Mammary epithelial cell (primary cell): ENCODE measurements at regions of chr1 and their contacts with region 1.

Region 1: GRCh38 chr1:185412385-185413083 is 95.5 kb upstream of the IVNS1ABP start:
- DNase-seq: peak; percentile 76
- H3K4me3 ChIP-seq: peak overlapping the region in 1 of 3 experiments; percentile 13
- H3K27ac ChIP-seq: peak overlapping the region; percentile 78
- H3K4me1 ChIP-seq: peaks cover 46% of the 10 kb centered on the region
- H3K27me3 ChIP-seq: no peaks in the 10 kb centered on the region
- CTCF ChIP-seq: peak in 1 of 2 donors; percentile 18

Region 2: GRCh38 chr1:185017326-185017725 is 395.2 kb before region 1 on chr1:
- CTCF ChIA-PET with region 1: no interaction called
- dilution Hi-C with region 1: no loop called
- in situ Hi-C with region 1: no loop called
- intact Hi-C with region 1: no loop called
- DNase-seq: peak; percentile 90
- H3K4me3 ChIP-seq: no peak overlapping the region
- H3K27ac ChIP-seq: peak overlapping the region; percentile 35
- H3K4me1 ChIP-seq: peaks cover 16% of the 10 kb centered on the region
- H3K27me3 ChIP-seq: no peaks in the 10 kb centered on the region
- CTCF ChIP-seq: no peak

Region 3: DNA sequence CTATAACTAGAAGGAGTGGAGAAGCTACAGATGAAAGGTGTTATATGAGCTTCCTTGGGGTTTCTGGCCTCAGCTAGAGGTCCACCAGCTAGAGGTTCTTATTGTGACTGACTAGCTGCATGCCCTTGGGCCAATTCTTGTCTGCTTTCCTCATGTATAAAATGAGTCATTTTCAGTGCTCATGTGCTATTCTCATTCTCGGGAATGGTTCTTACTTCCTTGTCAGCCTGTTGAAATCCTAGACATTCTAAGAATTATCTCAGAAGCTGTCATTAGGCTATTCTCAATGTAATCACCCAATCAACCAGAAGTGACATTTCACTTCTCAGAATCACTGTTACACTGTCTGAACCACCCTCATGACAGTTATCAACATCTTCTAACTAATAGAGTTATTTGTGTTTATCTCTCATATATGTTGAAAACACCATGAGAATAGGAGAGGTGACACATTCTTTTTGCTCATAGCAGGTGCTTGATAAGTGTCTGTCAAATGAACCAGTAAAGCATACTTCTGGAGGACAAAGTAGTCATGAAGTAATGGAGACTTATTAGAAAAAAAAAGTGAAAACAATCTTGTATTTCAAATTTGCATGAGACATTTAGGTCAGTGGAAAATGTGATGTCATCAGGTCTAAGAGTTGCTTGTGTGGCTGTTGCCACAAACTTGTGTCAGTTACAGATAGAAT is 27.3 kb after region 1 on chr1:
- CTCF ChIA-PET with region 1: no interaction called
- dilution Hi-C with region 1: no loop called
- in situ Hi-C with region 1: no loop called
- intact Hi-C with region 1: loop called (anchors 1 kb)
- DNase-seq: peak; percentile 89
- H3K4me3 ChIP-seq: no peak overlapping the region
- H3K27ac ChIP-seq: peak overlapping the region; percentile 12
- H3K4me1 ChIP-seq: peaks cover 25% of the 10 kb centered on the region
- H3K27me3 ChIP-seq: no peaks in the 10 kb centered on the region
- CTCF ChIP-seq: no peak